ENCODE measurements at regions of chr2 and their contacts with region 1.

Region 1: DNA sequence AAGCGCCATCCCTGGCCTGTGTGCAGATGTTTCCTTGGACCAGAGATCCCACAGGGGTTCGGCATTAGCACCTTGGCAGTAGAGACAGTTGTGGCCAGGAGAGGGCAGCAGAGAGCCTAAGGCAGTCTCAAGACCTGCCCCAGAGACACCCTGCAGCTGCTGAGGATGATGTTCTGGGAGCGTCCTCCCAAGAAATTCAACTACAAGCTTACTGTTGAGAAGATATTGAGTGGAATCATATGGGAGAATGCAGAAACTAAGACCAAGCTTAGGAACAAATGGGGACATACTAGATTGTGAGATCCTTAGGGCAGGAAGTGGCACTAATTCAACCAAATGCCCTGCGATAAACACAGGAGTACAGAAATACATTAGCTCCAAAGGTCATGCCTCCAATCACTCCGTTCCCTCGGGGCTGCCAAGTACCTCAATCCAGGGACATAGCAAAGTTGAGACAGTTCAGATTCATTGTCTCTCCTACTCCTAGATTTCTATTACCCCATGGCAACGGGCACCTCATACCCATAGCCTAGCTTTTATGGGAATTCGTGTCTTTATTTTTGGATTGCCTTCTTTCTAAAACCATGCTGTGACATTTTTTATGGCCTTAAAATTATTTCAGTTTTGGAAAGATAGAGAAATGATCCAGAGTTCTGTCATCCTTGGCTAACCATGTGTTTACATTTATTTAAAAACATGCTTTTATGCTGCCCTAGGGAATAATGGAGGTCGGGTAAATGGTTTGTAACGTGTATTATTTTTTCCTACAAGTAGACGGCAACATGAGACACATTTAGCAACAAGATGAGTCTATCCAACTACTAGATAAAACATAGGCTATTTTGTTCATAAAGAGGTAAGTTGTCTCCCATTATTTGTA is 2.2 kb upstream of the ERMN start:
- DNase-seq: peak; percentile 71
- ATAC-seq: peak; percentile 98
- H3K4me3 Mint-ChIP-seq: peak overlapping the region; percentile 66
- H3K27ac Mint-ChIP-seq: no peak overlapping the region
- H3K4me1 Mint-ChIP-seq: peaks cover 14% of the 10 kb centered on the region
- H3K27me3 Mint-ChIP-seq: no peaks in the 10 kb centered on the region
- CTCF ChIP-seq: peak; percentile 83

Region 2: GRCh38 chr2:157413326-157414035 is 85.6 kb after region 1 on chr2:
- CTCF ChIA-PET with region 1: interaction called, 12 read pairs
- POLR2A ChIA-PET with region 1: interaction called, 10 read pairs
- intact Hi-C with region 1: loop called (anchors 1 kb)
- DNase-seq: no peak
- ATAC-seq: peak; percentile 80
- H3K4me3 Mint-ChIP-seq: peak overlapping the region; percentile 42
- H3K27ac Mint-ChIP-seq: peak overlapping the region; percentile 84
- H3K4me1 Mint-ChIP-seq: peaks cover 79% of the 10 kb centered on the region
- H3K27me3 Mint-ChIP-seq: no peaks in the 10 kb centered on the region
- CTCF ChIP-seq: no peak

Region 3: DNA sequence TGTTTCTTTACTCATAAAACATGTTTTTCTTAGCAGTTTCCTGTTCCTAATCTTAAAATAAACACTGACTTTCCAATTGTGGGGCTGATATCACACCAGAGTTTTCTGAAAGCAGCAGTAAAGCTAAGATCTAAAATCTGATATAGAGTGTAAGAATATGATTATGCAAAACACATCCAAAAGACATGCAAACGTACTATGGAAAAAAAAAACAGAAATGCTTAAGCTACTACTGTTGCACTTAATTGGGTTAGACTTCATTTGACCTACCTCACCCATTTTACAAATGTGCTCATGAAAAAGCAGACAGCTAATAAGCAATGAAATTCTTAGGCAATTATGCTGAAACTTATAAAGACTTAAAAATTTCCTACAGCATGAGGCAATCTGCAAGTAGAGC is 105.5 kb after region 1 on chr2:
- CTCF ChIA-PET with region 1: interaction called, 36 read pairs
- POLR2A ChIA-PET with region 1: interaction called, 27 read pairs
- intact Hi-C with region 1: no loop called
- DNase-seq: no peak
- ATAC-seq: no peak
- H3K4me3 Mint-ChIP-seq: peak overlapping the region; percentile 57
- H3K27ac Mint-ChIP-seq: peak overlapping the region; percentile 61
- H3K4me1 Mint-ChIP-seq: peaks cover 86% of the 10 kb centered on the region
- H3K27me3 Mint-ChIP-seq: no peaks in the 10 kb centered on the region
- CTCF ChIP-seq: no peak

Region 4: DNA sequence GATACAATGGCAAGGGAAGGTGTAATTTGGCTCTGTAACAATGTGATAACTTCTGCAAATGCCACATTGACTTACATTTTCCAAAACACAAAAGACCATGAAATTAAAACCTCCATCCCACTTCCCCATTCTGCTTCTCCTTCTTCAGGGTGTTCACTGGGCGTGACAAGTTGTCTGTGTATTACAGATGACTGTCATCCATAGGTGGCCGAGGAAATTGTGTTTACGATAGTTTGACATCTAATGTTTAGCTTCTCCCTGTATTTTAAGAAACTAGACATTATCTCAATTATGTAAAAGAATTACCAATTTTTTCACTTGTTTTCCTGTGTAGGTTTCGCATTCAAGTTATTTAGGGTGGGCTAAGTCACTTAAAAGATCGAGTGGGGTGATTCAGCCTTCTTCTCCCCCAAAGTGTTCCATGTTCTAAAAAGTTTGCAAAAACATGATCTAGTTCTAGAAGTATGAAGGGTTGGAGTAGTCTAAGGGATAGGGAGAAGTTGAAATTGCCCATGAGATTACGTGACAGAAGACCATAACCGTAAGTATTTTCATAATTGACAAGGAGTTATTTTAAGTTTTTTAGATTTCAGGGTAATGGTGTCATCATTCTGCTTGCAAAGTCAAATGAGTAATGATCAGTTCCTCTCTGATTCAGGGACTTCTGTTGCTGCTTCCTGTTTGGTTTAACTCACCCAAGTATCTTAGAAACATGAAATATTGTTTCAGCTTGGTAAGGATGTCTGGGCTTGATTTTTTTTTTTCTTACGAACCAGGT is 141.3 kb after region 1 on chr2:
- CTCF ChIA-PET with region 1: interaction called, 15 read pairs
- POLR2A ChIA-PET with region 1: interaction called, 8 read pairs
- intact Hi-C with region 1: loop called (anchors 1 kb)
- DNase-seq: no peak
- ATAC-seq: peak; percentile 81
- H3K4me3 Mint-ChIP-seq: peak overlapping the region; percentile 81
- H3K27ac Mint-ChIP-seq: peak overlapping the region; percentile 99
- H3K4me1 Mint-ChIP-seq: peaks cover 87% of the 10 kb centered on the region
- H3K27me3 Mint-ChIP-seq: no peaks in the 10 kb centered on the region
- CTCF ChIP-seq: no peak

Region 5: DNA sequence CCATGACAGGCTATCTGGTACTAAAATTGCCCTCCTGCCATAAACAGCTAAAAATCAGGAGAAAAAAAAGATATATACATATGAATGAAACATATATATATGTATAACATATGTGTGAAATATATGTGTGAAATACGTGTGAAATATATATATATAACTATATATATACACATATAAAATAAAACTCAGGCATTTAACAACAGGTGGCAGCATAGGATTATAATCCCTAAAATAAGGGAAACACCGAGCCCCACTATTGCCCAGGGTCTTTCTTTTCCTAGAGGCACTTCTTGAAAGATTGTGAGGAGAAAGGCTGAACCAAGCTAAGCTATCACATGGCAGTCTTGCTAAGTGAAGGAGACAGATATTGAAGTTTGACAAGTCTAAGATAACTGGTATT is 181.9 kb after region 1 on chr2:
- CTCF ChIA-PET with region 1: interaction called, 15 read pairs
- POLR2A ChIA-PET with region 1: no interaction called
- intact Hi-C with region 1: no loop called
- DNase-seq: no peak
- ATAC-seq: no peak
- H3K4me3 Mint-ChIP-seq: no peak overlapping the region
- H3K27ac Mint-ChIP-seq: no peak overlapping the region
- H3K4me1 Mint-ChIP-seq: peaks cover 6% of the 10 kb centered on the region
- H3K27me3 Mint-ChIP-seq: peaks cover 10% of the 10 kb centered on the region
- CTCF ChIP-seq: no peak

Region 6: GRCh38 chr2:157751462-157752058 is 423.7 kb after region 1 on chr2:
- CTCF ChIA-PET with region 1: interaction called, 6 read pairs
- POLR2A ChIA-PET with region 1: no interaction called
- intact Hi-C with region 1: loop called (anchors 5 kb)
- DNase-seq: no peak
- ATAC-seq: peak; percentile 18
- H3K4me3 Mint-ChIP-seq: no peak overlapping the region
- H3K27ac Mint-ChIP-seq: no peak overlapping the region
- H3K4me1 Mint-ChIP-seq: peaks cover 4% of the 10 kb centered on the region
- H3K27me3 Mint-ChIP-seq: no peaks in the 10 kb centered on the region
- CTCF ChIP-seq: no peak